GM12878 (cell line): ENCODE measurements at regions of chr20 and their contacts with region 1.

Region 1: GRCh38 chr20:17682103-17682888 is at the start of gene RRBP1:
- DNase-seq: peak; percentile 82
- ATAC-seq: peak; percentile 98
- H3K4me3 ChIP-seq: peak within 1 kb of the TSS; percentile 78
- H3K27ac ChIP-seq: peak within 1 kb of the TSS; percentile 78
- H3K4me1 ChIP-seq: peaks cover 8% of the 10 kb centered on the region
- H3K27me3 ChIP-seq: peaks cover 0 to 8% of the 10 kb centered on the region in 2 experiments; a peak in 1 of 4 replicates
- CTCF ChIP-seq: peak; percentile 66 to 88 (median 79)
- EP300 ChIP-seq: no peak
- POLR2A ChIP-seq: peak; percentile 96
- RAD21 ChIP-seq: peak; percentile 39; the same call in 1 of the 2 replicates
- polyA plus RNA-seq, gene RRBP1: 1.2 to 2.4 TPM

Region 2: DNA sequence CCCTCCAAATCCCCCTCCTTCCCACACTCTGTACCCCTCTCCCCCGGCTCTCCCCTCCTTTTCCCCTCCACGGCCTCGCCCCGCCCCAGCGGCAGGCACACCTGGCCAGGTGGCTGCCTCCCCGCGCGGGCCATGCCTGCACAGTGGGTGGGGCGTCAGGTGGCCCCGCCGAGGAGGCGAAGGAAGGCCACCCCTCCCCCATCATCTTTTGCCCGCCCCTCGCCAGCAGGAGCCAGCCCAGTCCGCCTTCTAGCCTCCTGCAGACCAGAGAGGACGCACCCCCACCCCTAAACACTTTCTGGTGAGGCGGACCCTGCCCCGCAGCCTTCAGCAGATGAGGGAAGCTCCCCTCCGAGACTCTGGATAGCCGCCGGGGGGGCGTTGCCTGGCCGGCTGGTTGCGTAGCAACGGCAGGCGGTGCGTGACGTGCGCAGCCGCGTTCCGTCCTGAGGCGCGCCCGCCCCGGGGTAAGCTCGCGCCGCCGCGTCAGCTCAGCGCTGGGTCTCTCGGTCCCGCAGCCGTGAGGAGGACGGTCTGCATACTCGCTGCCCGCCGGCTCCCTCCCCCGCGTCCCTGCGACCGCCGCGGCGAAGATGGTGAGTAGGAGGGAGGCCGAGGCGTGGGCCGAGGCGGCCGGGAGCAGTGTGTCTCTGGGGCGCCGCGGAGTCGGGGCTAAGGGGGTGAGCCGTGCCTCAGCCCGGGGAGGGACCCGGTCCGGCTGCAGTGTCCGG is 112.5 kb before region 1 on chr20 and contains the start of gene DSTN:
- CTCF ChIA-PET with region 1: interaction called, 16 read pairs
- POLR2A ChIA-PET with region 1: interaction called, 3 read pairs
- RAD21 ChIA-PET with region 1: interaction called, 18 read pairs
- SMC1A ChIA-PET with region 1: interaction called, 7 read pairs
- in situ Hi-C with region 1: no loop called
- intact Hi-C with region 1: no loop called
- DNase-seq: peak; percentile 38
- ATAC-seq: peak; percentile 94
- H3K4me3 ChIP-seq: peak within 1 kb of the TSS; percentile 98
- H3K27ac ChIP-seq: peak within 1 kb of the TSS; percentile 45
- H3K4me1 ChIP-seq: peaks cover 4% of the 10 kb centered on the region
- H3K27me3 ChIP-seq: no peaks in the 10 kb centered on the region
- CTCF ChIP-seq: no peak
- EP300 ChIP-seq: no peak
- POLR2A ChIP-seq: peak; percentile 88
- RAD21 ChIP-seq: no peak
- polyA plus RNA-seq, gene DSTN: 34.8 to 46.6 TPM

Region 3: GRCh38 chr20:17693444-17694001 is 11.2 kb after region 1 on chr20:
- CTCF ChIA-PET with region 1: interaction called, 22 read pairs
- POLR2A ChIA-PET with region 1: no interaction called
- RAD21 ChIA-PET with region 1: no interaction called
- SMC1A ChIA-PET with region 1: interaction called, 5 read pairs
- in situ Hi-C with region 1: no loop called
- intact Hi-C with region 1: no loop called
- DNase-seq: no peak
- ATAC-seq: no peak
- H3K4me3 ChIP-seq: no peak overlapping the region
- H3K27ac ChIP-seq: no peak overlapping the region
- H3K4me1 ChIP-seq: no peaks in the 10 kb centered on the region
- H3K27me3 ChIP-seq: peaks cover 0 to 5% of the 10 kb centered on the region in 2 experiments; a peak in 1 of 4 replicates
- CTCF ChIP-seq: no peak
- EP300 ChIP-seq: no peak
- POLR2A ChIP-seq: no peak
- RAD21 ChIP-seq: no peak

Region 4: DNA sequence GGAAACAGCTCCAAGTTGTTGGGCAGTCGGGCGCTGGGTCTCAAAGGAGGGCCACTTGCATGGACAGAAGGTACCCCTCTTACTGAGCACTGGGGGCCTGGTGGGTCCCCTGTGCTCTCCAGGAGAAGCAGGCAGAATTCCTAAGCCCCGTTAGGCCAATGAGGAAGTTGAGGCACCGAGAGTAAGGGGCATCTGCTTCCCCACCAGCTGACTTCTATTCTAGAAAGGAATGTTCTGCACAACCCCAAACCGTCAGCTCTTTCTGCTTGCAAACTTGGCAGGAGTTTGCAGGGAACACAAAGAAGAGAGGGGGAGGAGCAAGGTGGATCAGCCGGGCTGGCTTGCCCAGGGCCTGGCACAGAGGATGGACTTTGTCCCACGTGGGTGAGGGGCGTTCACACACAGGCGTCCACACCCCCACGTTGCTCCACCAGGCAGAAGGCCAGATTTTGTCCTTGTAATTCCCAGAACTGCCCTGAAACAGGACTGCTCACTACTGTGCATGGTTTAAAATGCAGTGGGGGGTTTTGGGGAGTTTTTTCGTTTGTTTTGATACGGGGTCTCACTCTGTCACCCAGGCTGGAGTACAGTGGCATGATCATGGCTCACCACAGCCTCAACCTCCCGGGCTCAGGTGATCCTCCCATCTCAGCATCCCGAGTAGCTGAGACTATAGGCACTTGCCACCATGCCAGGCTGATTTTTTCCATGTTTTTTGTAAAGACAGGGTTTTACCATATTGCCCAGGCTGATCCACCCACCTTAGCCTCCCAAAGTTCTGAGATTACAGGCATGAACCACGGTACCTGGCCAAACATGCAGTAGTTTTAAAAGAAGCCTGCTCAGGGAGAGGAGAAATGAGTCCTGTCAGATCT is 193.0 kb after region 1 on chr20:
- CTCF ChIA-PET with region 1: interaction called, 4 read pairs
- POLR2A ChIA-PET with region 1: no interaction called
- RAD21 ChIA-PET with region 1: no interaction called
- SMC1A ChIA-PET with region 1: no interaction called
- in situ Hi-C with region 1: no loop called
- intact Hi-C with region 1: loop called (anchors 5 kb)
- DNase-seq: no peak
- ATAC-seq: no peak
- H3K4me3 ChIP-seq: no peak overlapping the region
- H3K27ac ChIP-seq: no peak overlapping the region
- H3K4me1 ChIP-seq: peaks cover 26% of the 10 kb centered on the region
- H3K27me3 ChIP-seq: no peaks in the 10 kb centered on the region
- CTCF ChIP-seq: no peak
- EP300 ChIP-seq: no peak
- POLR2A ChIP-seq: no peak
- RAD21 ChIP-seq: no peak

Region 5: DNA sequence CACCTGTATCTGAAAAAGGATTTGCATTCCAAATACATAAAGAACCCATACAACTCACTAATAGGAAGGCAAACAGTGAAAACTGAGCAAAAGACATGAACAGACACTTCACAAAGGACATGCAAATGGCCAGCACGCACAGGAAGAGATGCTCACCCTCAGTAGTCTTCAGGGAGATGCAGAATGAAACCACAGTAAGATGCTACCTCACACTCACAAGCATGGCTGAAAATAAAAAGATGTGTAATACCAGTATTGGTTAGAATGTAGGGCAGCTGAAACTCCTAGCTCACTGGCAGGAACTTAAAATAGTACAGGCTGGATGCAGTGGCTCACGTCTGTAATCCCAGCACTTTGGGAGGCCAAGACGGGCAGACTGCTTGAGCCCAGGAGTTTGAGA is 221.7 kb after region 1 on chr20:
- CTCF ChIA-PET with region 1: interaction called, 31 read pairs
- POLR2A ChIA-PET with region 1: interaction called, 3 read pairs
- RAD21 ChIA-PET with region 1: interaction called, 3 read pairs
- SMC1A ChIA-PET with region 1: interaction called, 6 read pairs
- in situ Hi-C with region 1: loop called (anchors 5 kb)
- intact Hi-C with region 1: no loop called
- DNase-seq: peak; percentile 64
- ATAC-seq: peak; percentile 95
- H3K4me3 ChIP-seq: no peak overlapping the region
- H3K27ac ChIP-seq: 0 out of 2 replicates have a peak overlapping the region, but pooled peaks have one; percentile 11
- H3K4me1 ChIP-seq: peaks cover 22% of the 10 kb centered on the region
- H3K27me3 ChIP-seq: no peaks in the 10 kb centered on the region
- CTCF ChIP-seq: no peak
- EP300 ChIP-seq: no peak
- POLR2A ChIP-seq: no peak
- RAD21 ChIP-seq: no peak

Region 6: GRCh38 chr20:17968366-17969279 is 286.3 kb after region 1 on chr20 and contains the starts of genes MGME1 and SNX5:
- CTCF ChIA-PET with region 1: interaction called, 12 read pairs
- POLR2A ChIA-PET with region 1: interaction called, 5 read pairs
- RAD21 ChIA-PET with region 1: interaction called, 4 read pairs
- SMC1A ChIA-PET with region 1: interaction called, 3 read pairs
- in situ Hi-C with region 1: no loop called
- intact Hi-C with region 1: loop called (anchors 2 kb)
- DNase-seq: peak; percentile 96
- ATAC-seq: peak; percentile 84
- H3K4me3 ChIP-seq: peak within 1 kb of the TSS; percentile 96
- H3K27ac ChIP-seq: peak within 1 kb of the TSS; percentile 98
- H3K4me1 ChIP-seq: no peaks in the 10 kb centered on the region; the same call in 1 of the 2 replicates
- H3K27me3 ChIP-seq: no peaks in the 10 kb centered on the region
- CTCF ChIP-seq: no peak
- EP300 ChIP-seq: 0 out of 4 replicates have a peak, but pooled peaks of 1 of the 2 experiments have one; percentile 49
- POLR2A ChIP-seq: peak; percentile 98
- RAD21 ChIP-seq: no peak
- polyA plus RNA-seq, gene MGME1: 13.4 to 14.1 TPM
- polyA plus RNA-seq, gene SNX5: 92.9 to 152 TPM

Region 7: GRCh38 chr20:18005231-18006109 is 323.2 kb after region 1 on chr20:
- CTCF ChIA-PET with region 1: interaction called, 4 read pairs
- POLR2A ChIA-PET with region 1: no interaction called
- RAD21 ChIA-PET with region 1: interaction called, 11 read pairs
- SMC1A ChIA-PET with region 1: interaction called, 5 read pairs
- in situ Hi-C with region 1: no loop called
- intact Hi-C with region 1: no loop called
- DNase-seq: peak; percentile 66
- ATAC-seq: peak; percentile 97
- H3K4me3 ChIP-seq: no peak overlapping the region
- H3K27ac ChIP-seq: peak overlapping the region; percentile 82
- H3K4me1 ChIP-seq: peaks cover 31% of the 10 kb centered on the region
- H3K27me3 ChIP-seq: no peaks in the 10 kb centered on the region
- CTCF ChIP-seq: no peak
- EP300 ChIP-seq: peak; percentile 78 to 88
- POLR2A ChIP-seq: peak; percentile 60
- RAD21 ChIP-seq: no peak